ENCODE measurements at regions of chr15 and their contacts with region 1.

Region 1: DNA sequence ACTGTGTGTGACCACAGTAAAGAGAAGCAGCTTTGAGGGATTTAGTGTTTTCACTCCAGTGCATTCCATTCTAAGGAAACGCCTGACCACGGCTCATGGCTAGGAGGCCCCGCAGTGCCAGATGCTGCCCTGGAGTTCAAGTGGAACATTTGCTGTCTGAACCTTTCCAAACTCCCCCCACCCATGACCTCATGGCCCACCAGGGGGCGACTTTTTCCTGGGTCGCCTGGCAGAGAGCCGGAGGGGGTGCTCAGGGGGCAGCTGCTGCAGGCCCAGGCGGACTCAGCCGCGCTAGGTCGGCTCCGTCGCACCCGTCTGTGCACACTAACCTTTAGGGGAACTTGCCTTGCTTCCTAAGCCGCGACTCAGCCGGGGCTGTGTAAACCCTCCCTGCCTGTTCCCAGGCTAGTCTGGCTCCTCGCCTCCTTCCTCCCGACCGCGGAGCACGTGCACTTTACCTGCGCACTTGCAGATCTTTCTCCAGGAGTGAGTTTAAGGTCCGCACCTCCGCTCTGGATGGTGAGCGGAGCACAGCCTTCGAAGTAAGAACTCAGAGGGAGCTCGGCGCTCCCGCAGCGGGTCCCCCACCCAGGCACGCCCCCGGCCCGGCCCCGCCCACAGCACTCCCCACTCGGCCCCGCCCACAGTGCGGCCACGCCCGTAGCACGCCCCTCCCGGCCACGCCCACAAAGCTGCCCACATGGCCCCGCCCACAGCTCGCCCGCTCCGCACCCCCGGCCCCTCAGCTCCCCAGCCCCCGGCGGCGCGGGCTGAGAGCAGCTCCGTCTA is at the start of gene OCA2:
- DNase-seq: peak; percentile 89 to 95
- H3K4me3 ChIP-seq: peak within 1 kb of the TSS; percentile 71
- H3K4me3 Mint-ChIP-seq: peak within 1 kb of the TSS; percentile 71
- H3K27ac Mint-ChIP-seq: no peak within 1 kb of the TSS
- H3K4me1 ChIP-seq: peaks cover 7% of the 10 kb centered on the region
- H3K4me1 Mint-ChIP-seq: peaks cover 11% of the 10 kb centered on the region
- H3K27me3 ChIP-seq: no peaks in the 10 kb centered on the region
- H3K27me3 Mint-ChIP-seq: peaks cover 10% of the 10 kb centered on the region
- CTCF ChIP-seq: peak; percentile 78 to 80
- total RNA-seq, gene OCA2: 0.57 and 0.86 TPM in 2 replicates

Region 2: GRCh38 chr15:26889298-26889898 is 1209.6 kb before region 1 on chr15:
- CTCF ChIA-PET with region 1: no interaction called
- POLR2A ChIA-PET with region 1: no interaction called
- intact Hi-C with region 1: loop called (anchors 10 kb)
- DNase-seq: peak in 1 of 2 experiments; percentile 55
- H3K4me3 ChIP-seq: no peak overlapping the region
- H3K4me3 Mint-ChIP-seq: no peak overlapping the region
- H3K27ac Mint-ChIP-seq: no peak overlapping the region
- H3K4me1 ChIP-seq: no peaks in the 10 kb centered on the region
- H3K4me1 Mint-ChIP-seq: no peaks in the 10 kb centered on the region
- H3K27me3 ChIP-seq: no peaks in the 10 kb centered on the region
- H3K27me3 Mint-ChIP-seq: peaks cover 2% of the 10 kb centered on the region
- CTCF ChIP-seq: peak in 1 of 2 experiments; percentile 42

Region 3: DNA sequence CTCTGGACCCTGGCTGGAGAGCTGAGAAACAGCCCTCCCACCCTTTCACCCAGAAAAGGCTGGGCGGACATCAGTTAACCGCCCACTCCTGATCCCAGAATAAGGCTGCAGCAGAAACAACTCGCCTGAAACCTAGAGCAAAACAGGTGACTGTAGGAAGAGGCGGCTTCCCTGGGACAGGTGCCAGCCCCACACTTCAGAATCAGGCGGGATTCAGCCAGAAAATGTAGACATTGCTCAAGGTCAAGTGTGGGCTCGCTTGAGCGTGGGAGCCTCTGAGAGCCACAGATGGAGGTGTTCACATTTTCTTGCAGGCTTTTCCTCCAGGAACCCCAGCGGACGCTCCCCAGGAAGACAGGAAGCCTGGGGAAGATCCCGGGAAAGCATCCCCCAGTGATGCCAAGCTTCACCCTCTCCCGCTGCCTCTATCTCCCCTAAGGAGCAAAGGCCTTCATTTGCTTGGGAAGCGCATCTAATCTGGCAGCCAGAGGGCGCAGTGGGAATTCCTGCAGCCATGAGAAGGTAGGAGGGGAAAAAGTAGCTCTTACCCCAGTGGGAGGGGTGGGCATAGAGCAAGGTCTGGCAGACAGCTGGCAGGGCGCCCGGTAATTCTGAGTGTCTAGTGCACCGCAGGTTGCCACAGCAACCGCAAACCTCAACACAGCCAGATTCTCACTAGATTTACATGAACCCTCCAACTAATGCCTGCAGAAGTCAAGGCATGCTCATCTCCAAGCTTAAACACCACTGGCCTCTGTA is 77.5 kb before region 1 on chr15:
- CTCF ChIA-PET with region 1: interaction called, 11 read pairs
- POLR2A ChIA-PET with region 1: no interaction called
- intact Hi-C with region 1: no loop called
- DNase-seq: peak in 1 of 2 experiments; percentile 47
- H3K4me3 ChIP-seq: no peak overlapping the region
- H3K4me3 Mint-ChIP-seq: no peak overlapping the region
- H3K27ac Mint-ChIP-seq: no peak overlapping the region
- H3K4me1 ChIP-seq: peaks cover 9% of the 10 kb centered on the region; the same call in 1 of the 2 replicates
- H3K4me1 Mint-ChIP-seq: no peaks in the 10 kb centered on the region
- H3K27me3 ChIP-seq: no peaks in the 10 kb centered on the region
- H3K27me3 Mint-ChIP-seq: no peaks in the 10 kb centered on the region
- CTCF ChIP-seq: peak; percentile 42 to 52

Region 4: GRCh38 chr15:28086175-28086703 is 12.7 kb before region 1 on chr15:
- CTCF ChIA-PET with region 1: interaction called, 6 read pairs
- POLR2A ChIA-PET with region 1: no interaction called
- intact Hi-C with region 1: loop called (anchors 1 kb)
- DNase-seq: peak; percentile 75 to 80
- H3K4me3 ChIP-seq: no peak overlapping the region
- H3K4me3 Mint-ChIP-seq: no peak overlapping the region
- H3K27ac Mint-ChIP-seq: no peak overlapping the region
- H3K4me1 ChIP-seq: peaks cover 13% of the 10 kb centered on the region
- H3K4me1 Mint-ChIP-seq: no peaks in the 10 kb centered on the region
- H3K27me3 ChIP-seq: no peaks in the 10 kb centered on the region
- H3K27me3 Mint-ChIP-seq: no peaks in the 10 kb centered on the region
- CTCF ChIP-seq: peak; percentile 63 to 90

Region 5: GRCh38 chr15:28123408-28124023 is 24.6 kb after region 1 on chr15:
- CTCF ChIA-PET with region 1: interaction called, 22 read pairs
- POLR2A ChIA-PET with region 1: no interaction called
- intact Hi-C with region 1: loop called (anchors 1 kb)
- DNase-seq: peak; percentile 80 to 86
- H3K4me3 ChIP-seq: no peak overlapping the region
- H3K4me3 Mint-ChIP-seq: no peak overlapping the region
- H3K27ac Mint-ChIP-seq: peak overlapping the region; percentile 58
- H3K4me1 ChIP-seq: no peaks in the 10 kb centered on the region
- H3K4me1 Mint-ChIP-seq: peaks cover 8% of the 10 kb centered on the region
- H3K27me3 ChIP-seq: no peaks in the 10 kb centered on the region
- H3K27me3 Mint-ChIP-seq: no peaks in the 10 kb centered on the region
- CTCF ChIP-seq: peak; percentile 76 to 83

Region 6: DNA sequence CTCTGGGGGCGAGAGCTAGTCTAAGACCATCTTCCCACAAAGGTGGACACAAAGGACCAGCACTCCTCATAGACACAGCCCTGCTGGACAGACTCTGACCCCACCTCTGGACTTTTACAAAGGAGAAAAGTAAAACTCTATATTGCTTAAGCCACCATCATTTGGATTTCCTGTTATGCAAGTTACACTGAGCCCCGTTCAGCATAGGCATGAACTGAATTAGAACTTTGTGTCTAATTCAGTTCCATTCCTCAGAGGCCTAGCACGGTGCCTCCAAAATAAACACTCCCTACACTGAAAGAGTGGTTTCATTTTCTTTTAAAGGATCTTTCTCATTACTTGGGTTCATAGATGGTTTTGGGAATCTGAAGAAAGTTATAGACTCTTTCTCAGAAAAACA is 79.3 kb after region 1 on chr15:
- CTCF ChIA-PET with region 1: no interaction called
- POLR2A ChIA-PET with region 1: no interaction called
- intact Hi-C with region 1: no loop called
- DNase-seq: no peak
- H3K4me3 ChIP-seq: no peak overlapping the region
- H3K4me3 Mint-ChIP-seq: no peak overlapping the region
- H3K27ac Mint-ChIP-seq: no peak overlapping the region
- H3K4me1 ChIP-seq: no peaks in the 10 kb centered on the region
- H3K4me1 Mint-ChIP-seq: no peaks in the 10 kb centered on the region
- H3K27me3 ChIP-seq: no peaks in the 10 kb centered on the region
- H3K27me3 Mint-ChIP-seq: no peaks in the 10 kb centered on the region
- CTCF ChIP-seq: no peak

Region 7: GRCh38 chr15:28219116-28219515 is 120.2 kb after region 1 on chr15:
- CTCF ChIA-PET with region 1: no interaction called
- POLR2A ChIA-PET with region 1: no interaction called
- intact Hi-C with region 1: no loop called
- DNase-seq: no peak
- H3K4me3 ChIP-seq: no peak overlapping the region
- H3K4me3 Mint-ChIP-seq: no peak overlapping the region
- H3K27ac Mint-ChIP-seq: no peak overlapping the region
- H3K4me1 ChIP-seq: no peaks in the 10 kb centered on the region
- H3K4me1 Mint-ChIP-seq: no peaks in the 10 kb centered on the region
- H3K27me3 ChIP-seq: no peaks in the 10 kb centered on the region
- H3K27me3 Mint-ChIP-seq: no peaks in the 10 kb centered on the region
- CTCF ChIP-seq: no peak

Measured in Caco-2 (cell line).